Transverse colon (tissue), 4 donors: ENCODE measurements at regions of chr13 and their contacts with region 1.

Region 1: GRCh38 chr13:47774671-47774994 is 226.4 kb downstream of the SUCLA2 start:
- DNase-seq: no peak
- H3K4me3 ChIP-seq: no peak overlapping the region
- H3K27ac ChIP-seq: no peak overlapping the region
- H3K4me1 ChIP-seq: no peaks in the 10 kb centered on the region
- H3K27me3 ChIP-seq: no peaks in the 10 kb centered on the region
- CTCF ChIP-seq: no peak
- EP300 ChIP-seq: no peak
- POLR2A ChIP-seq: no peak

Region 2: GRCh38 chr13:46831588-46832194 is 942.9 kb before region 1 on chr13:
- in situ Hi-C with region 1: loop called (anchors 10 to 25 kb)
- intact Hi-C with region 1: loop called (anchors 10 kb)
- DNase-seq: peak; percentile 20
- H3K4me3 ChIP-seq: no peak overlapping the region
- H3K27ac ChIP-seq: no peak overlapping the region
- H3K4me1 ChIP-seq: no peaks in the 10 kb centered on the region
- H3K27me3 ChIP-seq: no peaks in the 10 kb centered on the region
- CTCF ChIP-seq: peak; percentile 69 to 84 (median 74)
- EP300 ChIP-seq: no peak
- POLR2A ChIP-seq: no peak

Region 3: DNA sequence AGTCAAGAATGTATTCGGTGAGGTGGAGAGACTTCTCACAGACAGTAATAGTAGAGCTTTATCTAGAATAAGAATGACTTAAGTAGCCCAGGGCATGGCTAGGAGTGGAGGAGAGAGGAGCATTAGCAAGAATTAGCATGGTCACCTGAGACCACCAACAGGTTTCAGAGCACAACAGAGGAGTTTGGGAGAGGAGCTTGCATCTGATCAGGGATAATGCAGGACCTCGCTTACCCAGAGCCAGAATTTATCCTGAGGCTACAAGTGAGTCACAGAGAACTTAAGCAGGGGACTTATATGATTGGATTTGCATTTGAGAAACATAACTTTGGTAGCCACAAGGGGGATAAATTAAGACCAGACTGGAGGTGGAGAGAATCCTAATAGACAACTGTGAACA is 1099.0 kb after region 1 on chr13:
- in situ Hi-C with region 1: no loop called
- intact Hi-C with region 1: no loop called
- DNase-seq: no peak
- H3K4me3 ChIP-seq: no peak overlapping the region
- H3K27ac ChIP-seq: no peak overlapping the region
- H3K4me1 ChIP-seq: peaks cover 0 to 6% (median 1%) of the 10 kb centered on the region in 4 donors
- H3K27me3 ChIP-seq: no peaks in the 10 kb centered on the region
- CTCF ChIP-seq: no peak
- EP300 ChIP-seq: no peak
- POLR2A ChIP-seq: no peak